Calu3 (cell line): ENCODE measurements at regions of chr1 and their contacts with region 1.

Region 1: DNA sequence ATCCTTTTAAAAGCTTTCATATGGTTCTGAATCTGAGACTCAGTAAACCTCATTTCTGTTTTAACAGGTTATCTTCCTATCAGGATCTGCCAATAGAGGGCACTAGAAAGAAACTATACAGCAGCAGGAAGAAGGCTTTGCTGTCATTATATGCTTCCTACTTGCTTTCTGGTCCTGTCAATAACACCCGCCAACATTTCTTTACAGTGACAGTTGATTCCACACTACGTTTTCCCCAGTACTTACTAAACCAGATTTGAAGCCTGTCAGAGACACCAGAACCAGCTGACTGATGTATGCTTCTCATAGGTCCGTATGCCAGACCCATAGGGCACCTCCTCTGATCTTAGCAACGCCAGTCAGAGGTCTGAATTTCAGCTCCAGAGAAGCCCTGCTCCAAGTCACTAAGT is 341.0 kb upstream of the NEGR1 start:
- DNase-seq: peak; percentile 9
- H3K4me3 Mint-ChIP-seq: peak overlapping the region; percentile 74
- H3K27ac Mint-ChIP-seq: peak overlapping the region; percentile 78
- H3K4me1 Mint-ChIP-seq: peaks cover 8% of the 10 kb centered on the region
- H3K27me3 Mint-ChIP-seq: no peaks in the 10 kb centered on the region
- CTCF ChIP-seq: peak; percentile 32

Region 2: GRCh38 chr1:72034827-72035226 is 588.5 kb before region 1 on chr1:
- CTCF ChIA-PET with region 1: no interaction called
- intact Hi-C with region 1: no loop called
- DNase-seq: no peak
- H3K4me3 Mint-ChIP-seq: no peak overlapping the region
- H3K27ac Mint-ChIP-seq: no peak overlapping the region
- H3K4me1 Mint-ChIP-seq: no peaks in the 10 kb centered on the region
- H3K27me3 Mint-ChIP-seq: no peaks in the 10 kb centered on the region
- CTCF ChIP-seq: no peak

Region 3: DNA sequence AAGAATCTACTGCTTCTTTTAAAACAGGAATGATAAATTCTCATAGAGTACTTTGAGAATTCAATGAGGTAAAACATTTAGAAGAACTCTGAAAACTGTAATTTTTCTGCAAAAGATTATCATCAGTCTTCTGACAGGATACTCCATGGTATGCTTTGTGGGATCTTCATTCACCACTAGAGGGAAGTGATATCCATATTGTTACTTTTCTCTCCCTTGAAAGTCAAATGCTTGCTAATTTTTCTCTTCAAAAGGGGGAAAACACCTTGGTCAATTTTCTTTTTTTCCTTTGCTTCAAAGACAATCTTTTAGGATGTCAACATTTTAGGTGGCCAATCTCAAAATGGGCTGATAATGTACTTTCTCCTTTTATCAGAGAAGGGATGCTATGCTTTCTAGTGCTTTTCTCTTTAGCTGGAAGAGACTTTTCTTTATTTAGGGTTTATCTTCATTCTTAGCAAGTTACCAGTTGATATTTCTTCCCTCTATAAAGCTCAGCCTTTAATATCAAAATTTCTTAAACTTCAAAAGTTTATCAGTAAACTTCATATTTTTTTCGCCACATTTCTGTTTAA is 436.5 kb before region 1 on chr1:
- CTCF ChIA-PET with region 1: no interaction called
- intact Hi-C with region 1: loop called (anchors 5 kb)
- DNase-seq: no peak
- H3K4me3 Mint-ChIP-seq: no peak overlapping the region
- H3K27ac Mint-ChIP-seq: no peak overlapping the region
- H3K4me1 Mint-ChIP-seq: no peaks in the 10 kb centered on the region
- H3K27me3 Mint-ChIP-seq: no peaks in the 10 kb centered on the region
- CTCF ChIP-seq: peak; percentile 33

Region 4: GRCh38 chr1:72845342-72845741 is 222.0 kb after region 1 on chr1:
- CTCF ChIA-PET with region 1: no interaction called
- intact Hi-C with region 1: loop called (anchors 5 kb)
- DNase-seq: peak; percentile 22
- H3K4me3 Mint-ChIP-seq: no peak overlapping the region
- H3K27ac Mint-ChIP-seq: no peak overlapping the region
- H3K4me1 Mint-ChIP-seq: no peaks in the 10 kb centered on the region
- H3K27me3 Mint-ChIP-seq: no peaks in the 10 kb centered on the region
- CTCF ChIP-seq: no peak